Activated T-helper 1 cell treated with anti-CD3 and anti-CD28 coated beads, Interleukin-12 subunit alpha, Interleukin-12 subunit beta, Interleukin-2, Interleukin-4 antibody, amounts not matched to agents 30 ng/mL and 10 ng/mL and 1 ng/mL, durations not matched to agents 14 hours and 24 hours and 36 hours (primary cell): ENCODE measurements at regions of chr14 and their contacts with region 1.

Region 1: DNA sequence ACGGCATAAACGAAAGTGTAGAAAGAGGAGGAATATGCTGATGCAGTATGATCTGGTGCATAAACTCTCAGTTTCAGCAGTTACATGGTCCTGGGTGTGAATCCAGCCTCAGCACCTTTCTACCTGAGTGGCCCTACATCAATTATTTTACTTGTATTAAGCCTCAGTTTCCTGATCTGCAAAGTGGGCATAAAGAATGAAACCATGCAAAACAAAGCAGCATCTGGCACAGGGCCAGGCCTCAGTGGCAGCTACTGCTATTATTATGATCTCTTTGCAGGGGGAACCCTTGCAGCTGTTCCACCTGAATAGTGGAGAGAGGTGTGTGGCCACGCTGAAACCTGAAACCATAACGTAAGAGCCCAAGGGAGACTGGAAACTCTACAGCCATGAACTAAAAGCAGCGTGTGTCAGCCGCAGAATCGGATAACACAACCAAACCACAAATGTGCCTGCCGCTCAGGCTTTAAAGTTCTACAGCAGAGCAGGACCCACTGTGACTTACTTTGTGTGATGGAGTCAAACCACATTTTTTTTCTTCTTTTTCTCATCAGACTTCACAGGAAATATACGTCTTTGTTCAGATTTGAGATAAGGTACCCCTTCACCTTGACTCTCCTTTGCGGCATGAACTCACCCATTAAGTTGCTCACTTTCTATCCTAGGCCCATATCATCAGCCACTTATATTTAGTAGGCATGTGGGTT is 29.2 kb upstream of the FOS start:
- DNase-seq: peak; percentile 86
- H3K4me3 Mint-ChIP-seq: peak overlapping the region; percentile 48
- H3K27ac Mint-ChIP-seq: peak overlapping the region; percentile 85
- H3K4me1 Mint-ChIP-seq: peaks cover 54% of the 10 kb centered on the region
- H3K27me3 Mint-ChIP-seq: peaks cover 39% of the 10 kb centered on the region

Region 2: GRCh38 chr14:75002392-75003249 is 246.8 kb before region 1 on chr14 and contains the start of gene EIF2B2:
- intact Hi-C with region 1: loop called (anchors 2 kb)
- DNase-seq: peak; percentile 99
- H3K4me3 Mint-ChIP-seq: peak within 1 kb of the TSS; percentile 98
- H3K27ac Mint-ChIP-seq: peak within 1 kb of the TSS; percentile 92
- H3K4me1 Mint-ChIP-seq: peaks cover 54% of the 10 kb centered on the region
- H3K27me3 Mint-ChIP-seq: peaks cover 10% of the 10 kb centered on the region
- total RNA-seq, gene EIF2B2: 52.8 and 54.3 TPM in 2 replicates

Region 3: DNA sequence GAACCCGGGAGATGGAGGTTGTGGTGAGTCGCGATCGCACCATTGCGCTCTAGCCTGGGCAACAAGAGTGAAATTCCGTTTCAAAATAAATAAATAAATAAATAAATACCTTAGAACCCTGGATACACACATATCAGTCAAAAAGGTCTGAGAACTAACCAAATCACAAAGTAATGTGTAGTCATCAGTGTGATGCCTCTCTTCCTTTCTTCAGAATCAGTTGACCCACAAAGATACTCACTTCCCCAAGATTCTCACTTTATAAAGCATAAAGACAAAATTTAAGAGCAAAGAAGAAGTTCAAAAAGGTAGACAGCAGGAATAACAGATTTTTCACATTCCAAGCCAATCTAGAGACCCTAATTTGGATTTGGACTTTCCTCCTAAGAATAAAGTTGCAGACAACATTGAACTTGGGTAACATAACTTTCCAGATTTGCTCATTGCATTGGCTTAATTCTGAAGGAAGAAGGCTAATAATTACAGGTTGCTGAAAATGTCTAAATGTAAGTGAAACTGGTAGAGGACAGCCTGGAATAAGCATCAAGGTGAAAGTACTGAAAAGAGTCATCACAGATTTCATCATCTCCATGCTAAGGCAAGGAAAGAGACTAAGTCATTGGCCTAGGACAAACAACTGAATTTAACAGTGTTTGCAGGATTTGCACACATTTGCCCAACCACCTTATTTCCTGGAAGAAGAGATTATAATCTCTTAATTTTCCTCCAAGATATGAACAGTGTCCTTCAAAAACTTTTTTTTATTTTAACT is 90.4 kb before region 1 on chr14:
- intact Hi-C with region 1: loop called (anchors 5 kb)
- DNase-seq: no peak
- H3K4me3 Mint-ChIP-seq: no peak overlapping the region
- H3K27ac Mint-ChIP-seq: no peak overlapping the region
- H3K4me1 Mint-ChIP-seq: peaks cover 47% of the 10 kb centered on the region
- H3K27me3 Mint-ChIP-seq: no peaks in the 10 kb centered on the region

Region 4: GRCh38 chr14:75230140-75231045 is 19.0 kb before region 1 on chr14:
- intact Hi-C with region 1: loop called (anchors 1 kb)
- DNase-seq: peak; percentile 31
- H3K4me3 Mint-ChIP-seq: no peak overlapping the region
- H3K27ac Mint-ChIP-seq: no peak overlapping the region
- H3K4me1 Mint-ChIP-seq: peaks cover 48% of the 10 kb centered on the region
- H3K27me3 Mint-ChIP-seq: peaks cover 19% of the 10 kb centered on the region

Region 5: DNA sequence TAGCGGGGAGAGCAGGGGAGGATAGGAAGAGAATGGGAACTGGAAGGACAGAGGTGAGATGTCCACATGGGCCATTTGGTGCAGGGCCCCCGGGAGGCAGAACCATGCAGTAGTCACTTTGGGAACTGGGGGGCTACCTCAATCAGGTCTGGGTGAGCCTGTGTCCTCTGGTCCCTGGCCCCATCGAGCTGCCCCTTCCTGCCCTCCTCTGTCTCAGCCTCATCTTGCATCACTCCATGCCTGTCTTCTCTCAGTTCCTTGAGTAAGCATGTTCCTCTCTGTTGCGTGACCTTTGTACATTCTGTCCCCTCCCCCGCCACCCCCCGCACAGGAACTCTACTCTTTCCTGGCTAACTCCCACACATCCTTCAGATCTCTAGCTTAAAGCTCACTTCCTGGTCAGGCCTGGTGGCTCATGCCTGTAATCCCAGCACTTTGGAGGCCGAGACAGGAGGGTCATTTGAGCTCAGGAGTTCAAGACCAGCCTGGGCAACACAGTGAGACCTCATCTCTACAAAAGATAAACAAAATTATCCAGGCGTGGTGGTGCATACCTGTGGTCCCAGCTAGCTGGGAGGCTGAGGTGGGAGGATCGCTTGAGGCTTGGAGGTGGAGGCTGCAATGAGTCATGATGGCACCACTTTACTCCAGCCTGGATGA is 52.4 kb after region 1 on chr14:
- intact Hi-C with region 1: loop called (anchors 1 kb)
- DNase-seq: no peak
- H3K4me3 Mint-ChIP-seq: peak overlapping the region; percentile 44
- H3K27ac Mint-ChIP-seq: peak overlapping the region; percentile 79
- H3K4me1 Mint-ChIP-seq: peaks cover 25% of the 10 kb centered on the region
- H3K27me3 Mint-ChIP-seq: peaks cover 3% of the 10 kb centered on the region

Region 6: GRCh38 chr14:75560962-75561432 is 311.6 kb after region 1 on chr14:
- intact Hi-C with region 1: loop called (anchors 1 kb)
- DNase-seq: no peak
- H3K4me3 Mint-ChIP-seq: peak overlapping the region; percentile 15
- H3K27ac Mint-ChIP-seq: peak overlapping the region; percentile 93
- H3K4me1 Mint-ChIP-seq: peaks cover 68% of the 10 kb centered on the region
- H3K27me3 Mint-ChIP-seq: no peaks in the 10 kb centered on the region